ENCODE measurements at regions of chr17 and their contacts with region 1.

Region 1: DNA sequence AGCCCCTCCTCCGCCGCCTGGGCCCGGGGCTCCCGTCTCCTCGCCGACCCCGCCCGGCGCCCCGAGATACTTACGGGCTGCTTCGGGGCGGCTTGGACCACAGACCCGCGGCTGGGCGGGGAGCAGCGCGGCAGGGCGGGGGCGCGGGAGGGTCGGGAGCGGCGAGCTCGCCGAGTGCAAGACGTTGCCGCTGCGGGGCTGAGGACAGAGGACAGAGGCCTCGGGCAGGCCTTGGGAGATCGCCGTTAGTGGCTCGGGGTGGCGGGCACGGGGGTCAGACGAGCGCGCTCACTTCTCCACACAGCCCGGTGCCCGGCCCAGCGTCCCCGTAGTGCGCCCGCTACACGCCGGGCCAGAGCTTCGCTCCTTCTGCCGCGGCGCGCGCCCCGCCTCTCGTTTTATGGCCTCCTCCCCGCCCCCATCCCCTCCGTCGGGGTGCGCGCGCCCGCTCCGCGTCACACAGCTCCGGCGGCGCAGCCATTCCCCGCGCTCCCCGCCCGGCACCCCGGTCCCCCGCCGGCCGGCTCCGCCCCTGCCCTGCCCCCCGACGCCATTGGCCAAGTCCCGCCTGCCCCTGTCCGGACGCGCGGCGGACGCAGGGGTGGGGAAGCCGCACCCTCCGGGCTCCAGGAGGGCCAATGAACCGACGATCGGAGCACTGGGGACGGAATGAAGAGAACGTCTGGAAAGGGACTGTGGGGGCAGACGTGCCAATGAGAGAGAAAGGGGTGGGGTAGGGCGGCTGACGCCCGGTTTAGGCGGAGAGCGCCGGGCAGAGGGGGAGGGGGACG is at the start of gene TOB1:
- DNase-seq: peak; percentile 94 to 97 (median 95)
- H3K4me3 ChIP-seq: peak within 1 kb of the TSS; percentile 87 to 92
- H3K4me3 Mint-ChIP-seq: peak within 1 kb of the TSS; percentile 97 to 100 (median 98)
- H3K27ac ChIP-seq: peak within 1 kb of the TSS; percentile 97
- H3K27ac Mint-ChIP-seq: peak within 1 kb of the TSS; percentile 96 to 100 (median 99)
- H3K4me1 ChIP-seq: peaks cover 67% of the 10 kb centered on the region
- H3K4me1 Mint-ChIP-seq: peaks cover 38 to 73% (median 51%) of the 10 kb centered on the region in 4 donors
- H3K27me3 ChIP-seq: no peaks in the 10 kb centered on the region
- H3K27me3 Mint-ChIP-seq: no peaks in the 10 kb centered on the region
- total RNA-seq, gene TOB1: 93.7 to 104 TPM

Region 2: GRCh38 chr17:50397111-50397918 is 468.9 kb before region 1 on chr17 and contains the start of gene LRRC59:
- CTCF ChIA-PET with region 1: no interaction called
- POLR2A ChIA-PET with region 1: interaction called, 11 read pairs
- intact Hi-C with region 1: no loop called
- DNase-seq: peak; percentile 88 to 96 (median 92)
- H3K4me3 ChIP-seq: peak within 1 kb of the TSS; percentile 75 to 82
- H3K4me3 Mint-ChIP-seq: peak within 1 kb of the TSS; percentile 87 to 97 (median 92)
- H3K27ac ChIP-seq: peak within 1 kb of the TSS; percentile 85
- H3K27ac Mint-ChIP-seq: peak within 1 kb of the TSS; percentile 84 to 99 (median 95)
- H3K4me1 ChIP-seq: peaks cover 30% of the 10 kb centered on the region
- H3K4me1 Mint-ChIP-seq: peaks cover 23 to 47% (median 30%) of the 10 kb centered on the region in 4 donors
- H3K27me3 ChIP-seq: no peaks in the 10 kb centered on the region
- H3K27me3 Mint-ChIP-seq: no peaks in the 10 kb centered on the region
- total RNA-seq, gene LRRC59: 30.3 to 30.7 TPM

Region 3: DNA sequence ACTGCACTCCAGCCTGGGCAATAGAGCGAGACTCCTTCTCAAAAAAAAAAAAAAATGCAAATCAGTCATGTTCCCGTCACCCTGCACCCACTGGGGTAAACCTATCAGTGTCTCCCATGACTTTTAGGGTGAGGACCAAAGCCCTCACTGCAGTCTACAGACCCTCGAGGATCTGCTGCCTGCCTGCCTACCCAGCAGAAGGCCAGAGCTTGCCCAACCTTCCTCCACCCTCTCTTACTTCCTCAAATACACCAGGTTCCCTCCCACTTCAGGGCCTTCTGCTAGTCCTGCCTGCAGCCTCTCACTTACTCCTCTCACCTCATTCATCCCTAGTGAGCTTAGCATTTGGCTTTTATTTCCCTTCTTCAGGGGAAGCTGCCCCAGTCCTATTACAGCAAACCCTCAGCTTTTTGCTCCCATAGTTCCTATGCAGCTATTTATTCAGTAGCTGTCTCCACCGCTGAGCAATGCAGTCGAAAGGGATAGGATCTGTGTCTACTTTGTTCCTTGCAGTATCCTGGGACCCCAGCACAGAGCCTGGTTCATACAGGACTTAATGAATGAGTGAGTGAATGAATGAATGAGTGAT is 17.8 kb after region 1 on chr17:
- CTCF ChIA-PET with region 1: interaction called, 6 read pairs
- POLR2A ChIA-PET with region 1: interaction called, 116 read pairs
- intact Hi-C with region 1: loop called (anchors 2 kb)
- DNase-seq: no peak
- H3K4me3 ChIP-seq: no peak overlapping the region
- H3K4me3 Mint-ChIP-seq: peak overlapping the region in 1 of 8 donors; percentile 25
- H3K27ac ChIP-seq: no peak overlapping the region
- H3K27ac Mint-ChIP-seq: peak overlapping the region in 5 of 7 donors; percentile 14 to 88 (median 71)
- H3K4me1 ChIP-seq: peaks cover 27% of the 10 kb centered on the region
- H3K4me1 Mint-ChIP-seq: peaks cover 26 to 44% (median 31%) of the 10 kb centered on the region in 4 donors
- H3K27me3 ChIP-seq: no peaks in the 10 kb centered on the region
- H3K27me3 Mint-ChIP-seq: no peaks in the 10 kb centered on the region

Region 4: DNA sequence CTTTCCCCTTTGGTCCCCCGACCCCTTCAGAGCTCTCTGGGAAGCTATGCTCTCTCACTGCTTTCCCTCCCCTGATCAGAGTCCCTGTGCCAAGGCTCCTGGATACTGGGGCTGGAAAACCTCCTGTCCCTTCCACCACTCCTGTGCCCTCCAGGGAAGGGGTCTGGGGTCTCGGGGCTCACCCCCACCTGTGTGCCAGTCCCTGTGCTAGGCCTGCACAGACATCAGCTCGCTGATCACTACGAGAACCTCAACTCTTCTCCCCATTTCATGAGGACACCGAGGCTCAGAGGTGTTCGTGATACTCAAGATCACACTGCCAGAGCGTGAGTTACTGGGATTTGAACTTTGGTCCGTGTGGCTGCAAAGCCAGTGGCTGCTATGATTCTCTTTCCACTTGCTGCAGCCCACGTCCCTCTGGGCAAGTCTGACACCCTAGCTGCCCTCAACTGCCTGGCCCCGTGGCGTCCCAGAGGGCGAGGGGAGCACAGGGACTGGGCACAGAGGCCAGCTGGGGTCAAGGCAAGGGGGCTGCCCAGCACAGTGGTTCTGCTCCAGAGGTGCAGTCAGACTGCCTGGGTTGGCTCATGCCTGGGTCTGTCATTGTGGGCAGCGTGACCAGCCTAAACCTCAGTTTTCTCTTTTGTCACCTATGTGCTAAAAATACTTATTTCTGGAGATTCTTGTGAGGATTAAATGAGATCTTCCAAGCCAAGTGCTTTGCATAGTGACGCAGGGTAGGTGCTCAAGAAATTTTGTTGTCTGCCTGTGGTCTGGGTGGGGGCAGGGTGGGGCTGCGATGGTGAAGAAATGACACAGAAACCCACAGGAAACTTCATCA is 43.8 kb after region 1 on chr17:
- CTCF ChIA-PET with region 1: interaction called, 13 read pairs
- POLR2A ChIA-PET with region 1: interaction called, 688 read pairs
- intact Hi-C with region 1: loop called (anchors 1 kb)
- DNase-seq: peak in 4 of 5 donors; percentile 76 to 93 (median 82)
- H3K4me3 ChIP-seq: peak overlapping the region in 1 of 2 donors; percentile 30
- H3K4me3 Mint-ChIP-seq: peak overlapping the region in 7 of 8 donors; percentile 46 to 89 (median 73)
- H3K27ac ChIP-seq: peak overlapping the region; percentile 84
- H3K27ac Mint-ChIP-seq: peak overlapping the region; percentile 96 to 99 (median 99)
- H3K4me1 ChIP-seq: peaks cover 75% of the 10 kb centered on the region
- H3K4me1 Mint-ChIP-seq: peaks cover 37 to 73% (median 54%) of the 10 kb centered on the region in 4 donors
- H3K27me3 ChIP-seq: no peaks in the 10 kb centered on the region
- H3K27me3 Mint-ChIP-seq: no peaks in the 10 kb centered on the region

Region 5: DNA sequence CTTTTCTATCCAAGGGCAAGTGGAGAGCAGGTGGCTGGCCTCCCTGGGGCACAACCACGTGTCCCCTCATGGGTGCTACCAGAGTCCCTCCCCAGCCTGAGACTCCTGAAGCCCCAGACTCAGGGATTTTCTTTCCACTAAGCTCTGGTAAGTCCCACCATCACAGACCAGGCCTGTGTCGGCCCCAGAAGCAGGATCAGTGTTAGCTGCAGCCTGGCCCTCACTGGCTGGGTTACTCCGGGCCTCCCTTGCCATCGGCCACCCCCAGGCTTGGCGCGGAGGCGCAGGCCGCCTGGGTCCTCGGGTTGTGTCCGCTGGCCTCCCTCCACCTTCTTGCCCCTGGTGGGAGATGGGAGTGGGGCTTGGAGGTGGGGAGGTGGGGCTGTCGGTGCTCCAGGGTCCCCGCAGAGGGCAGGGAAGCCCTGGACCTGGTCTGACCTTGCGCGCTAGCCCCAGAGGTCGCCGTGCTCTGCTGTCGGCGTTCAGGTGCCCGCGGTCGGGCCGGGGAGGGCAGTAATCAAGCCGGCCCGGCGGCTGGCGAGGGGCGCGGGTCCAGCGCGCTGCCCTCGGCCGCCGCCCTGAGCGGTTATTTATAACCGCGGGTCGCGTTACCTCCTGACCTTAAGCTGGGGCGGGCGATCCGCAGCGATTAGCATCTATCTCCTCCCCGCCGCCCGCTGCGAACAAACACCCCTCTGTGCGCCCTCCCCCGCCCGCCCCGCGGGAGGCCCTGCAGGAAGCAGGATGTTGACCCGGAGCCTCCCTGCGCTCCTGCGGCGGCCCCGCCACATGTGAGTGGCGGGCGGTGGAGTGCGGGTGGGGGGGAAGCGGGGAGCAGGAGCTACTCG is 78.1 kb after region 1 on chr17:
- CTCF ChIA-PET with region 1: interaction called, 30 read pairs
- POLR2A ChIA-PET with region 1: interaction called, 673 read pairs
- intact Hi-C with region 1: loop called (anchors 1 kb)
- DNase-seq: peak; percentile 73 to 82 (median 76)
- H3K4me3 ChIP-seq: peak overlapping the region; percentile 46 to 49
- H3K4me3 Mint-ChIP-seq: peak overlapping the region; percentile 79 to 88 (median 84)
- H3K27ac ChIP-seq: peak overlapping the region; percentile 73
- H3K27ac Mint-ChIP-seq: peak overlapping the region; percentile 87 to 94 (median 93)
- H3K4me1 ChIP-seq: peaks cover 40% of the 10 kb centered on the region
- H3K4me1 Mint-ChIP-seq: peaks cover 21 to 52% (median 36%) of the 10 kb centered on the region in 4 donors
- H3K27me3 ChIP-seq: no peaks in the 10 kb centered on the region
- H3K27me3 Mint-ChIP-seq: no peaks in the 10 kb centered on the region

Region 6: DNA sequence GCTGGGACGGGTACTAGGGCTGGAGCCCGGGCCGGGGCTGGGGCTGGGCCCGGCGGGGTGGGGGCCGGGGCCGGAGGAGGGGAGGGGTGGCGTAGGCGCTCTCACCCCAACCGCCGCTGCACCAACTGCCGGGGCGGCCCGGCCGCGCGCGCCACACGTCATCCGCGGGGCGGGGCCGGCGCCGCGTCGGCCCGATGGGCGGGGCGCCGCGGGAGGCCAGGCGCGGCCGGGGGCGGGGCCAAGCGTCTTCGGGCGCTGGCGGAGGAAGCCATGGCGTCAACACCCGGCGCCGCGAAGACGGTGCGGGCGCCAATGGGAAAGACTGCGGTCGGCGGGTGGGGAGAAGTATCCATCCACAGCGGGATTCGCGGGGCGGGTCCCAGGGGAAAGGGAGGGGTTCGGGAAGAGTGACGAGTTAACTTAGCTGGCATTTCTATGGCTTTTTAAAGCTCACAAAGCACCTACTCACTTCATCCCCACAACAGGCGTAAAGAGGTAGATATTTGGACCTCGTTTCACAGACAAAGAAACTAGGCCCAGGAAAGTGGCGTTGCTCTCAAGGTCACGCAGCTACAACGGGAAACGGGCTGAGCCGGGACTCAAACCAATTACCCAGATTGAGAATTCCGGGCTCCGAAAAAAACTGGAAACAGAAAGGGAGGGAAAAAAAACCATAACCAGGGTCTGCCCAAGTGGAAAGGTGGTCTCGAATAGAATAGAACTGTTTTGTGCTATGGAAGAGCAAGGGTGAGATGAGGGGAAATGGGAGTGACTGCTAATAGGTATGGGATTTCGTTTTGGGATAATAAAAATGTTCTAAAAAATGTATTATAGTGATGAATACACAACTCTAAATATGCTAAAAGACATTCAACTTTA is 254.8 kb after region 1 on chr17 and contains the start of gene SPAG9:
- CTCF ChIA-PET with region 1: no interaction called
- POLR2A ChIA-PET with region 1: interaction called, 31 read pairs
- intact Hi-C with region 1: loop called (anchors 2 kb)
- DNase-seq: peak; percentile 90 to 94 (median 91)
- H3K4me3 ChIP-seq: peak within 1 kb of the TSS; percentile 90 to 91
- H3K4me3 Mint-ChIP-seq: peak within 1 kb of the TSS; percentile 95 to 99 (median 98)
- H3K27ac ChIP-seq: peak within 1 kb of the TSS; percentile 96
- H3K27ac Mint-ChIP-seq: peak within 1 kb of the TSS; percentile 97 to 100 (median 100)
- H3K4me1 ChIP-seq: peaks cover 50% of the 10 kb centered on the region
- H3K4me1 Mint-ChIP-seq: peaks cover 27 to 63% (median 41%) of the 10 kb centered on the region in 4 donors
- H3K27me3 ChIP-seq: no peaks in the 10 kb centered on the region
- H3K27me3 Mint-ChIP-seq: no peaks in the 10 kb centered on the region
- total RNA-seq, gene SPAG9: 62.0 to 62.3 TPM